Heart left ventricle (tissue), 16 donors: ENCODE measurements at regions of chr1 and their contacts with region 1.

Region 1: DNA sequence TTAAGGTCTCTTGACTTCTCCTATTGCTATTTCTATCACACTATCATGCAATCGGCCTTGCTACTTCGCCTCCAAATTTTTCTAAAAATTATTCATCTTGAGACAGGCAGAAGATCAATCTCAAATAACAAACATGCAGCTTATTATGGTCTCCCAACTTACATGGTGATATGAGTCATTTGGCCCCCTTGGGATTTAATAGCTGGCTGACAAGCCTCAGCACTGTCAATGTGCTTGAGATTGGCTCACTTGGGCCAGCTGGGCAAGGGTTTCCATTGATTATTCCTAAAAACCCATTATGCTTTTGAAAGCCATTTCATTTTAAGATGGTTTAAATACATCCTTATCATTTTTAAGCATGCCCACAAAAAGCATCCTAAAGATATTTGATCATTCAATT is 224.5 kb upstream of the NFIA start:
- DNase-seq: no peak
- ATAC-seq: no peak
- H3K4me3 ChIP-seq: no peak overlapping the region
- H3K27ac ChIP-seq: no peak overlapping the region
- H3K4me1 ChIP-seq: peaks cover 0 to 11% (median 3%) of the 10 kb centered on the region in 12 donors
- H3K27me3 ChIP-seq: no peaks in the 10 kb centered on the region
- CTCF ChIP-seq: no peak
- POLR2A ChIP-seq: no peak

Region 2: DNA sequence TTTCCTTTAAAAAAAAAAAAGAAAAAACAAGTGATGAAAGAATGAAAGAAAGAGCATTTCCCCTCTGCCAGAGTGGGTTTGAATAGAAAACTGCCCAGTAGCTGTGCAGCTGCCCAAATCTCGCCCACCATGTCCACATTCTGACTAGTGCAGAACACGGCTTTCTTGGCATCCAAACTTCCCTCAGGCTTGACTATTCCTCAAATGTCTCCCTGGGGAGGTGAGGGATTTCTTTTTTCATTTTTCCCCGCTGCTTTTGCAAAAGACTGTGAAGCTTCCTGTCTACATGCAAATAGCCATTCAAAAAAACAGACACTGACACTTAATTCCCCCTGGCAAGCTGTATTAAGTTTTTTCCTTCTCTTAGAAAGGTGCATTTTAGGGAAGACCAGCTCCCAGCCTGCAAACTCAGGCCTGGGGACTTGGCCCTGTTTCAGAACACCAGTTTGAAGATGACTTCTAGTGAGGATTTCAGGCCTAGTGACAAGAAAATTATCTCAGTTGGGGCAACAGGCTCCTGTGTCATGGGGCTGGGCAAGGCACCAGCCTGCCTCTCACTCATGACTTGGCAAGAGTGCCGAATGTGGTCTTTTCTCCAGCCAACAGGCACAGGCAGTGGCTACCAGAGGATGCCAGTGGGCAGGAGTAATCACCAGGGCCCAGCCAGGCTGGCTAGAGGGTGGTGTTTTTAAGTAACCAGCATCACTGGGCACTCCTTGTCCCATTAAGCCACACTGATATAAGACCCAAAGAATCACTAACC is 46.4 kb after region 1 on chr1:
- intact Hi-C with region 1: loop called in 1 of 10 experiments (anchors 5 kb)
- DNase-seq: peak; percentile 71 to 85 (median 73)
- ATAC-seq: peak; percentile 82 to 95 (median 92)
- H3K4me3 ChIP-seq: peak overlapping the region in 1 of 12 donors; percentile 12
- H3K27ac ChIP-seq: peak overlapping the region; percentile 27 to 92 (median 86)
- H3K4me1 ChIP-seq: peaks cover 0 to 51% (median 25%) of the 10 kb centered on the region in 12 donors
- H3K27me3 ChIP-seq: no peaks in the 10 kb centered on the region
- CTCF ChIP-seq: no peak
- POLR2A ChIP-seq: no peak

Region 3: DNA sequence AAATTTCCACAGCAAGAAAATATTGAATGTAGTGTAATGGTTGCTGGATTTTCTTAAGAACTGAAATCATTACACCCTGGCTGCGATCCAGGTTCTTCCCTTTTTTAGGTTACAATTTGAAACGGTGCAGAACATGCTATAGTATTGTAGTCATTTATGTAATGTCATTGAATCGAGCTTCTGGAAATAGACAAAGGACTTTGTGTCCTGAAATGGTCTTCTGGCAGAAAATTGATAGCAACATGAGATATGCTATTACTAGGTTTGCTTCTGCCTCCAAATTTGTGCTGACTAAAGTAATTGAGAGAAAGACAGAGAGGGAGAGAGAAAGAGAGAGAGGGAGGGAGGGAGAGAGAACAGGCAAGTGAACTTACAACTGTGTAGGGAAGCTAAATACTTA is 78.3 kb after region 1 on chr1:
- intact Hi-C with region 1: no loop called
- DNase-seq: no peak
- ATAC-seq: peak in 1 of 4 donors; percentile 31
- H3K4me3 ChIP-seq: no peak overlapping the region
- H3K27ac ChIP-seq: no peak overlapping the region
- H3K4me1 ChIP-seq: peaks cover 0 to 18% (median 5%) of the 10 kb centered on the region in 12 donors
- H3K27me3 ChIP-seq: no peaks in the 10 kb centered on the region
- CTCF ChIP-seq: no peak
- POLR2A ChIP-seq: no peak

Region 4: GRCh38 chr1:60950224-60951063 is 92.6 kb after region 1 on chr1:
- intact Hi-C with region 1: loop called in 2 of 10 experiments (anchors 2 to 10 kb)
- DNase-seq: no peak
- ATAC-seq: peak in 1 of 4 donors; percentile 34
- H3K4me3 ChIP-seq: no peak overlapping the region
- H3K27ac ChIP-seq: no peak overlapping the region
- H3K4me1 ChIP-seq: peaks cover 0 to 28% (median 3%) of the 10 kb centered on the region in 12 donors
- H3K27me3 ChIP-seq: no peaks in the 10 kb centered on the region
- CTCF ChIP-seq: no peak
- POLR2A ChIP-seq: no peak

Region 5: DNA sequence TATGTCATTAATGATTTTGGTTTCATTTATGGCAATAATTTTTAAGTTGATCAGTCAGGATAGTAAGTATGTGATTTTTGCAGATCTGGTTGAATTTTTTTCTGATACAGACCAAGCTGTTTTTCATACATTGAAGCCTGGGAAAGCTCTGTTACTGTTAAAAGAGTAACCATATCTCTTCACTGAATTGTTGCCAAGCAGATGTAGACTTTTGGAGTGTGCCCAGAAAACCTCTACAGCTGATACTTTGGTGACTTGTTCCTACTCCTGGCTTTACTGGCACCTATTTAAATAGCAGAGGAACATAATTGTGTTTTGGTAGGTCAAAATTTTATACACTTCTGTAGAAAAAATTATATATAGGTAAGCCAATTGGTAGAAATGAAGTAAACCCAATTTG is 273.9 kb after region 1 on chr1:
- intact Hi-C with region 1: no loop called
- DNase-seq: no peak
- ATAC-seq: no peak
- H3K4me3 ChIP-seq: peak overlapping the region in 4 of 12 donors; percentile 9 to 31 (median 22)
- H3K27ac ChIP-seq: peak overlapping the region in 11 of 12 donors; percentile 50 to 88 (median 63)
- H3K4me1 ChIP-seq: peaks cover 6 to 60% (median 29%) of the 10 kb centered on the region in 12 donors
- H3K27me3 ChIP-seq: no peaks in the 10 kb centered on the region
- CTCF ChIP-seq: no peak
- POLR2A ChIP-seq: no peak